A549 (cell line): ENCODE measurements at regions of chr15 and their contacts with region 1.

Region 1: DNA sequence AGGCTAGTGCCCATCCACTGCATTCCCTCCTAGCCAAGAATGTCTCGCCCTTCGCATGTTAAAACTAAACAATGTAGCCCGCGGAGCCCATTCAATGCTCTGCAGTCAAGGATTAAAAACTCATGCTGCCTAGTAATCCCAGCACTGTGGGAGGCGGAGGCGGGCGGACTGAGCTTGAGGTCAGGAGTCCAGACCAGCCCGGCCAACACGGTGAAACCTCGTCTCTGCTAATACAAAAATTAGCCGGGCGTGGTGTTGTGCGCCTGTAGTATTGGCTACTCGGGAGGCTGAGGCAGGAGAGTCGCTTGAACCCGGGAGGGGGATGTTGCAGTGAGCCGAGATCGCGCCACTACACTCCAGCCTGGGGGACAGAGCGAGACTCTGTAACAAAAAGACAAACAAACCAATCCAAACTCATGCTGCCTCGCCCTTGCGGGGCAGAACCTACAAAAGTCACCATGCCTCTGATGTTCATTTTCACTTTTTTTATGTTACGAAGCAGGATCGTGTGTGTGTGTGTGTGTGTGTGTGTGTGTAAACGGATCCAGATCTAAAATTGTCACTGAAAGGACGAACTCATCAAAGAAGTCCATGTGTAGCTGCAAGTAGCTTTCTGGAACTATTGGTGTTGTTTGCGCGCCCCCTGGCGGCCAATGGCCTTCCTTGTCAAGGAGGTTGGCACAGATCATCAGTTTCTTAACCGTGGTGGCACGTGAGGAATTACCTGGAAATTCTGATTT is 54.8 kb upstream of the SPESP1 start:
- DNase-seq: peak; percentile 91 to 92
- ATAC-seq: peak; percentile 87 to 96
- H3K4me3 ChIP-seq: peak overlapping the region; percentile 17; the same call in 2 of the 3 replicates
- H3K27ac ChIP-seq: no peak overlapping the region
- H3K4me1 ChIP-seq: no peaks in the 10 kb centered on the region; the same call in 2 of the 3 replicates
- CTCF ChIP-seq: peak; percentile 99
- EP300 ChIP-seq: no peak
- POLR2A ChIP-seq: no peak
- RAD21 ChIP-seq: peak; percentile 98 to 99

Region 2: GRCh38 chr15:68304589-68305337 is 570.8 kb before region 1 on chr15:
- CTCF ChIA-PET with region 1: interaction called, 24 read pairs
- POLR2A ChIA-PET with region 1: no interaction called
- DNase-seq: no peak
- ATAC-seq: peak; percentile 10 to 11; a peak in 3 of 6 replicates
- H3K4me3 ChIP-seq: no peak overlapping the region
- H3K27ac ChIP-seq: peak overlapping the region in 1 of 2 experiments; percentile 58; a peak in 2 of 6 replicates
- H3K4me1 ChIP-seq: peaks cover 47% of the 10 kb centered on the region
- CTCF ChIP-seq: no peak
- EP300 ChIP-seq: no peak
- POLR2A ChIP-seq: no peak
- RAD21 ChIP-seq: no peak

Region 3: DNA sequence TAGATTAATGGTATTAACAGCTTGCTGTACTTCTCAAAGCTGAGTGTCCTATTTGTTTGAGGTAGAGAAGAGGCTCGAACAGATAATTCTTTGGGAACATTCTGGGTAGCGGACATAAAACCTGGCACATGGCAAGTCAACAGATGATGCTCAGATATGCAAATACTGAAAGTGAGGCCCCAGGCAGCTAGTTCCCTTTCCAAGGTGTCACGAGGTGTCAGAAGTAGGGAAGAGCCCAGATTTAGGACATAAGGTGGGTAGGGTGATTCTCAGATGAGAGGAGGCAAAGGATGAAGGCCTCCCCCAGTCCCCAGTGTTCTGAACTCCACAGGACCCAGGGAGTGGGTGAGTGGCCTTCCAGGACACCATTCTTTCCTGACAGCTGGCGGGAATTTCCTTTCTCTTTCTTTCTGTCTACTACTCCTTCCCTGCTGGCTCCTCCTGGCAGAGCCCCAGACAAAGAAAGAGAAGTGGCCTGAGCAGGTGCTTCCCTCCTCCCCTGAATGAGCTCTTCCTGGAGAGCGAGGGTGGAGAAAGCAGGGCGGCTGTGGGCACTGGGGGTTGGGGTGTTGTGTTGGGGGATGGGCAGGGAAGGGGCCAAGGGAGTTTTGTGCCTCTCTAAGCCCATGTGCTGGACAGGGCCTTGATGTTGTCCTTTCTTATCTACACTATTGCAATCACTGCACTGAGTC is 209.3 kb before region 1 on chr15:
- CTCF ChIA-PET with region 1: interaction called, 11 read pairs
- POLR2A ChIA-PET with region 1: no interaction called
- DNase-seq: no peak
- ATAC-seq: no peak; a peak in 1 of 6 replicates
- H3K4me3 ChIP-seq: no peak overlapping the region
- H3K27ac ChIP-seq: no peak overlapping the region
- H3K4me1 ChIP-seq: no peaks in the 10 kb centered on the region
- CTCF ChIP-seq: no peak
- EP300 ChIP-seq: no peak
- POLR2A ChIP-seq: no peak
- RAD21 ChIP-seq: no peak

Region 4: DNA sequence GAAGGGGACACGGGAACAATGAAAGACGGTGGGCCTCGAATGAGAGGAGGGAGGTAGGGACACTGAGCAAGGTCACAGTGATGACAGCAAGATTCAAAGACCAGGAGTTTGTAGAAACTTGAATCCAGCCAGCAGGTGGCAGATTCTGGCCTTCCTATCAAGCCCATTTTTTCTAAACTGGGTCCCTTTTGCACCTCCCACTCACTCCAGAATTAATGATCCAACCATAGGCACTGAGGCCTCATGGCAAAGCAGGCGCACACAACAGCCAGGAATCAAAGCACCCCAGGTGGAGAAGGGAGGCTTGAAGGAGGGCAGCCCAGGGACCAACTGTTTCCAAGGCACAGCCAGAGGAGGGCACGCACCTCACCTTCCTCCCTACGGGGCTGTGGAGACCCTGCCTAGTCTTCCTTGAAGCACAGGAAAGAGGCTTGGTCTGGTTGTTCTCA is 145.1 kb before region 1 on chr15:
- CTCF ChIA-PET with region 1: interaction called, 74 read pairs
- POLR2A ChIA-PET with region 1: interaction called, 3 read pairs
- DNase-seq: peak; percentile 31 to 68
- ATAC-seq: peak; percentile 44 to 81; a peak in 3 of 6 replicates
- H3K4me3 ChIP-seq: no peak overlapping the region
- H3K27ac ChIP-seq: no peak overlapping the region
- H3K4me1 ChIP-seq: no peaks in the 10 kb centered on the region
- CTCF ChIP-seq: peak; percentile 65
- EP300 ChIP-seq: no peak
- POLR2A ChIP-seq: no peak
- RAD21 ChIP-seq: peak; percentile 80

Region 5: DNA sequence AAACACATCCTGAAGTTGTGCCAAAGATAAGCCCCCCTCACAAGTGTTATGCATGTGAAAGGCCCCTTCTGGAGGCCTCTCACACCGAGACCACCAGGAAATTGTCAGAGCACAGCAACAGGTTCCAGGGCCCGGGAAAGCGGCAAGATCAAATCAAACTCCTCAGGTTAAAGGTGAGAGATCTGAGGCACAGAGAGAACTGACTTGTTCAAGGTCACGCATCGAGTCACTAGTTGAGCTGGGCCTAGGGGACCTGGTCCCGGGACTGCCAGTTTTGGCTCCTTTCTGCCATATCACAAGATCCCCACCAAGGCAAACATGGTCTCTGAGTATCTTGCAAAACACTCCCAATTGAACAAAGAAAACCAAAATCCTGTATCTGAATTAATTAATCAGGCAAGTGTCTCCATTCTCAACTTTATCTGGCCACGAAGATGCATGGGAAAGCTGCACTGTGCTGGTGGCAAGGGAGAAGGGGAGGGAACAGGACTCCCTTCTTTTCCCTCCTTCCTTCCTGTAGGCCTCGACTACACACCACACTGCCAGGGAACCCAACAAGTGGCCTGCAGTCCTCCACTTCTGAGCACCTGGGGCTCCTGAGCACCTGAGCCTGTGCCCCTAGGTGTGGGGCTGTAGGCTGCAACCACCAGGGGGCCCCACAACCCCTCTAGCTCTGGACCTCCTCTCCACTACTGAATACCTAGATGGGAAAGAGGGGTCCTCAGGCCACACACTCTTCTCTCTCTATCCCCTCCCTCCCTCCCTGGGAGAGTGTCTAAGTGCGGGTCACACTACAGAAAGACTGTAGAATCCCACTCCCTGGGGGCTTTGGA is 92.1 kb before region 1 on chr15:
- CTCF ChIA-PET with region 1: interaction called, 110 read pairs
- POLR2A ChIA-PET with region 1: no interaction called
- DNase-seq: peak; percentile 39 to 75
- ATAC-seq: peak; percentile 72 to 94
- H3K4me3 ChIP-seq: no peak overlapping the region
- H3K27ac ChIP-seq: no peak overlapping the region
- H3K4me1 ChIP-seq: peaks cover 10% of the 10 kb centered on the region; the same call in 1 of the 3 replicates
- CTCF ChIP-seq: peak; percentile 71
- EP300 ChIP-seq: no peak
- POLR2A ChIP-seq: no peak
- RAD21 ChIP-seq: peak; percentile 62 to 68

Region 6: DNA sequence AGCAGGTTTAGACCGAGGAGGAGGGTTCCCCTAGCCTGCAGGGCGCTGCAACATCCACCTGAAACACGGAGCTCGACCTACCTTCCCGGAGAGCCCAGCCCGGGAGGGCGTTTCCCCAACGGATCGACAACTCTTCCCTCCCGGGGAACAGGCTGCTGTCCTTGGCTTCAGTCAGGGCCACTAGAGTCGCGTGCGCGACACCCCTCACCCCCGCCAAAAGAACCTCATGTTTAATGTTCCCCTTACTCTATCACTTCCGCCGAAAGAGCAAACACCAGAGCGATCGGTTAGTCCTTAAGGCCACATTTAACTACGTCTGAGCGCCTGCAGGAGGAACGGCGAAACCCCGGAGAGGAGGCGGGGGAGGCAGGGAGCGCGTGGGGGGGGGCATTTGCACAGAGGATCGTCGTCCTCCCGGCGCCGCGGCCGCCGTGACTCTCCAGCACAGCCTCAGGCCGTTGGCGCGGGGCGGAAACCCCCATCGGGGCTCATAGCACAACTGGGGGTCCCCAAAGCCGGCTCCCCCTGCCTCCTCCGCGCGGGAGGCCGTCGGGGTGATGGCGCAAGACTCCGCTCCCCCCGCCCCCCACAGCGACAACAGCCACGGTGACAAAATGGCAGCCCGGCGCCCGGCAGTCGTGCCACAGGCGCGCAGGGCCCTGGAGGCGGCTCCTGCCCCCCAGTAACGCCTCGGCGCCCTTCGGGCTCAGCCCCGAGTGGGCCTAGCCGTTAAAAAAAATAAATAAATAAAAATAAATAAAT is 58.1 kb before region 1 on chr15:
- CTCF ChIA-PET with region 1: interaction called, 14 read pairs
- POLR2A ChIA-PET with region 1: no interaction called
- DNase-seq: peak; percentile 60 to 73
- ATAC-seq: peak; percentile 15 to 36; a peak in 3 of 6 replicates
- H3K4me3 ChIP-seq: peak overlapping the region; percentile 74
- H3K27ac ChIP-seq: peak overlapping the region; percentile 98 to 99
- H3K4me1 ChIP-seq: peaks cover 45% of the 10 kb centered on the region
- CTCF ChIP-seq: no peak
- EP300 ChIP-seq: no peak
- POLR2A ChIP-seq: peak; percentile 19; the same call in 1 of the 2 replicates
- RAD21 ChIP-seq: 0 out of 5 replicates have a peak, but pooled peaks of 1 of the 2 experiments have one; percentile 12

Region 7: DNA sequence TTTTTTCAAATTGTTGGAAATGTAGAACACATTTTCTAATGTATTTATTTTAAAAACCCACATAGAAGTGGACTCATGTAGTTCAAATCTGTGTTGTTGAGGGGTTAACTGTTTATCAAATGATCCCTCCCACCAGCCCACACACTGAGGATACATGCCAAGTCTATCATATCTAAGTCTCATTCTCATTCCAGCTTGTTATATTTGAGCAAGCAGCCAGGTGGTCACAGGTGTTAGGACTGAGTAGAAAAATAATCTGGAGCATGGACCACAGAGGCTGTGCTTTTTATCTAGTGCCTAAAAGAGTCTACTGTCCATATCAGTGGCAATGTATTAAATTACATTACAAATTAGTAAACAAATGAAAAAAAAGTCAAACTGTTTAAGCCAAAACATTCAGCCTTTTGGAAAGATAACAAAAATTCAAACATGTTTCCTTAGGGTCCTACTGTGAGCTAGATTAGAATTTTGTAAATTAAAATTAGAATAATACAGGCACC is 34.1 kb after region 1 on chr15:
- CTCF ChIA-PET with region 1: interaction called, 28 read pairs
- POLR2A ChIA-PET with region 1: no interaction called
- DNase-seq: no peak
- ATAC-seq: no peak
- H3K4me3 ChIP-seq: no peak overlapping the region
- H3K27ac ChIP-seq: no peak overlapping the region
- H3K4me1 ChIP-seq: no peaks in the 10 kb centered on the region
- CTCF ChIP-seq: no peak
- EP300 ChIP-seq: no peak
- POLR2A ChIP-seq: no peak
- RAD21 ChIP-seq: no peak

Region 8: GRCh38 chr15:69081310-69082004 is 205.9 kb after region 1 on chr15:
- CTCF ChIA-PET with region 1: no interaction called
- POLR2A ChIA-PET with region 1: no interaction called
- DNase-seq: no peak
- ATAC-seq: peak in 1 of 2 experiments; percentile 32; a peak in 2 of 6 replicates
- H3K4me3 ChIP-seq: no peak overlapping the region
- H3K27ac ChIP-seq: no peak overlapping the region; a peak in 1 of 6 replicates
- H3K4me1 ChIP-seq: no peaks in the 10 kb centered on the region
- CTCF ChIP-seq: no peak
- EP300 ChIP-seq: no peak
- POLR2A ChIP-seq: no peak
- RAD21 ChIP-seq: no peak